H1 (cell line): ENCODE measurements at regions of chr7 and their contacts with region 1.

Region 1: DNA sequence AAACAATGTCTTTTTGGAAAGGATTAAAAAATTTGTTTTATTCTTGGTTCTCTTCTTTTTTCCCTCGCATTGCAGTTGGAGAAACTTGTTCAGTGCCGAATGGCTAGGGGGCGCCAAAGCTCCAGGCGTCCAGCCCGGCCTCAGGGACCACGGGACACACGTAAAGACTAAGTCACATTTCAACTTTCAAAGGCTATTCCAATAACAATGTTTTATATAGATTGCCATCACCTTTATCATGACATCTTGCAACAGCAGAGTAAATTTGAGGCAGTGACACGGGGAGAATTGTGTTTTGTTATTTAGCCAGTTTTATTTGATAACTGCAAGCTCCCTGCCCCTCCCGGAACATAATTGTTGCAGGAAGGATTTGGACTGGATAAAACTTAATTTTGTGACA is 2.2 kb upstream of the IGFBP3 start:
- DNase-seq: peak in 1 of 2 experiments; percentile 88
- H3K4me3 ChIP-seq: peak overlapping the region in 2 of 4 experiments; percentile 17 to 67; a peak in 5 of 8 replicates
- H3K27ac ChIP-seq: no peak overlapping the region
- H3K4me1 ChIP-seq: peaks cover 6 to 26% (median 12%) of the 10 kb centered on the region in 4 experiments; a peak in 6 of 7 replicates
- H3K27me3 ChIP-seq: peaks cover 14 to 41% (median 33%) of the 10 kb centered on the region in 4 experiments
- CTCF ChIP-seq: peak; percentile 74 to 86 (median 85)
- EP300 ChIP-seq: no peak
- POLR2A ChIP-seq: no peak
- RAD21 ChIP-seq: peak; percentile 93 to 94

Region 2: DNA sequence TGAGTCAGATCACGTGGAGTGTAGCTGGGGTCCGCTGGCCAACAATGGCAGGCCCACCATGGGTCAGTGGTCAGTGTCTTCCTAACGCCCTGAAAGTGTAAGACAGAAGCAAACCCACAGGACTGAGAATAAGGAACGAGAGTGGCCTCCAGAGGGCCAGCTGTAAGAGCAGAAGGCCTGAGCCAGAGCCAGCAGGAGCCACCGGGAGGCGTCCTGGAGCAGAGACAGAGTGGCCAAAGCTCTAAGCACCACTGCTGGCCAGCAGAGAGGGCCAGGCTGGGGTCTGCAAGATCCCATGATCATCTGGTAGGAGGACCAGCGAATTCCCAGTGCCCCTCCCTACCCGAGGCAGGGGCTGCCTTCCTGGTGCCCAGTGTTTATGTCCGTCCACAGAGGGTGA is 59.6 kb before region 1 on chr7:
- CTCF ChIA-PET with region 1: interaction called, 11 read pairs
- POLR2A ChIA-PET with region 1: no interaction called
- DNase-seq: peak in 1 of 2 experiments; percentile 69
- H3K4me3 ChIP-seq: no peak overlapping the region
- H3K27ac ChIP-seq: no peak overlapping the region
- H3K4me1 ChIP-seq: no peaks in the 10 kb centered on the region
- H3K27me3 ChIP-seq: no peaks in the 10 kb centered on the region
- CTCF ChIP-seq: peak; percentile 82 to 99 (median 86)
- EP300 ChIP-seq: no peak
- POLR2A ChIP-seq: no peak
- RAD21 ChIP-seq: peak; percentile 47 to 61

Region 3: GRCh38 chr7:45911306-45911705 is 12.0 kb before region 1 on chr7:
- CTCF ChIA-PET with region 1: interaction called, 12 read pairs
- POLR2A ChIA-PET with region 1: no interaction called
- DNase-seq: no peak
- H3K4me3 ChIP-seq: no peak overlapping the region
- H3K27ac ChIP-seq: no peak overlapping the region
- H3K4me1 ChIP-seq: no peaks in the 10 kb centered on the region
- H3K27me3 ChIP-seq: no peaks in the 10 kb centered on the region
- CTCF ChIP-seq: no peak
- EP300 ChIP-seq: no peak
- POLR2A ChIP-seq: no peak
- RAD21 ChIP-seq: no peak

Region 4: DNA sequence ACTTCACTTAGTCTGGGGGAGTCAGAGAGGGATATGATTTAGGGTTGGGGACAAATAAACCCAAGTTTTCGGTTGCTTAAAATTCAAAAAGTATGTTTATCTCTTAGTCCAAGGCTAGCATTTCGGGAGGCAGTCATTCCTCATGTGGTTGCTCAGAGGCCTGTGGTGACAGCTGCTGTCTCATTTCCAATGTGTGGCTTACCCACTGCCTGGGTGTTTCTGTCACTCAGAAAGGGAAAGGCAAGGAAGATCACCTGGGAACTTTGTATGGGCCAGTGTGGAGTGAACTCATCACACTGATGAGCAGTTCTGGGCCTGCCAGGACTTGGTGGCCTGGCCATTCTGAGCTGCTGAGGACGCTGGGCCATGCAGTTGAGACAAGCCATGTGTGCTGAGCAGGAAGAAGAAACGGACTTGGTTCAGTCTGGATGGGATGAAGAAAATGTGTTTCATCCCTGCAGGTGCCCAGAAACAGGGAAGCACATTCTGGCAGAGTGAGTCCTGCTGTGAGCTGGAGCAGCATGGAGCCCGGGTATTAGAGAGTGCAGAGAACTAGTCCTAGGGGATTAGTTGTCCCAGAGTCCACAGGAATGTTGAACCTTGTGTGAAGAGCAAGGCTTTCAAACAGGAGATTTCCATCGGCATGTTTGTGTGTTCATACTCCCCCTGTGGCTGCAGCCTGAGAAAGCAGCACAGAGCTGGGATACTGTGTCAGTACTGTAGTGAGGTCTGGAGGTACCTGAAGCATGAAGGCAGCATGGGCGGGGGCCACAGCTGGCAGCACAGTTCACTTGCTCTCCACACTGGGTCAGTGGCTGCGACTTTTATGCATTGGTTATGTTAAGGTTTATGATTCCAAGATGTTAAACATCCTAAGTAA is 208.9 kb after region 1 on chr7:
- CTCF ChIA-PET with region 1: interaction called, 20 read pairs
- POLR2A ChIA-PET with region 1: no interaction called
- DNase-seq: no peak
- H3K4me3 ChIP-seq: no peak overlapping the region
- H3K27ac ChIP-seq: no peak overlapping the region
- H3K4me1 ChIP-seq: peaks cover 0 to 2% (median 0%) of the 10 kb centered on the region in 4 experiments; a peak in 2 of 7 replicates
- H3K27me3 ChIP-seq: no peaks in the 10 kb centered on the region
- CTCF ChIP-seq: peak; percentile 27 to 54 (median 36); a peak in 3 of 4 replicates
- EP300 ChIP-seq: no peak
- POLR2A ChIP-seq: no peak
- RAD21 ChIP-seq: peak; percentile 48 to 56

Region 5: GRCh38 chr7:46162609-46163008 is 239.3 kb after region 1 on chr7:
- CTCF ChIA-PET with region 1: interaction called, 12 read pairs
- POLR2A ChIA-PET with region 1: no interaction called
- DNase-seq: no peak
- H3K4me3 ChIP-seq: no peak overlapping the region
- H3K27ac ChIP-seq: no peak overlapping the region
- H3K4me1 ChIP-seq: no peaks in the 10 kb centered on the region
- H3K27me3 ChIP-seq: no peaks in the 10 kb centered on the region
- CTCF ChIP-seq: no peak
- EP300 ChIP-seq: no peak
- POLR2A ChIP-seq: no peak
- RAD21 ChIP-seq: no peak

Region 6: GRCh38 chr7:46315891-46316290 is 392.6 kb after region 1 on chr7:
- CTCF ChIA-PET with region 1: interaction called, 10 read pairs
- POLR2A ChIA-PET with region 1: no interaction called
- DNase-seq: no peak
- H3K4me3 ChIP-seq: no peak overlapping the region
- H3K27ac ChIP-seq: no peak overlapping the region
- H3K4me1 ChIP-seq: no peaks in the 10 kb centered on the region
- H3K27me3 ChIP-seq: no peaks in the 10 kb centered on the region
- CTCF ChIP-seq: no peak
- EP300 ChIP-seq: no peak
- POLR2A ChIP-seq: no peak
- RAD21 ChIP-seq: no peak